ENCODE measurements at regions of chr6 and their contacts with region 1.

Region 1: GRCh38 chr6:25359191-25359861 is 80.2 kb downstream of the CARMIL1 start:
- DNase-seq: no peak
- ATAC-seq: no peak
- H3K4me3 ChIP-seq: no peak overlapping the region
- H3K4me3 Mint-ChIP-seq: no peak overlapping the region
- H3K27ac ChIP-seq: no peak overlapping the region
- H3K27ac Mint-ChIP-seq: no peak overlapping the region
- H3K4me1 ChIP-seq: no peaks in the 10 kb centered on the region
- H3K4me1 Mint-ChIP-seq: peaks cover 19% of the 10 kb centered on the region
- H3K27me3 ChIP-seq: no peaks in the 10 kb centered on the region
- H3K27me3 Mint-ChIP-seq: no peaks in the 10 kb centered on the region
- CTCF ChIP-seq: no peak

Region 2: DNA sequence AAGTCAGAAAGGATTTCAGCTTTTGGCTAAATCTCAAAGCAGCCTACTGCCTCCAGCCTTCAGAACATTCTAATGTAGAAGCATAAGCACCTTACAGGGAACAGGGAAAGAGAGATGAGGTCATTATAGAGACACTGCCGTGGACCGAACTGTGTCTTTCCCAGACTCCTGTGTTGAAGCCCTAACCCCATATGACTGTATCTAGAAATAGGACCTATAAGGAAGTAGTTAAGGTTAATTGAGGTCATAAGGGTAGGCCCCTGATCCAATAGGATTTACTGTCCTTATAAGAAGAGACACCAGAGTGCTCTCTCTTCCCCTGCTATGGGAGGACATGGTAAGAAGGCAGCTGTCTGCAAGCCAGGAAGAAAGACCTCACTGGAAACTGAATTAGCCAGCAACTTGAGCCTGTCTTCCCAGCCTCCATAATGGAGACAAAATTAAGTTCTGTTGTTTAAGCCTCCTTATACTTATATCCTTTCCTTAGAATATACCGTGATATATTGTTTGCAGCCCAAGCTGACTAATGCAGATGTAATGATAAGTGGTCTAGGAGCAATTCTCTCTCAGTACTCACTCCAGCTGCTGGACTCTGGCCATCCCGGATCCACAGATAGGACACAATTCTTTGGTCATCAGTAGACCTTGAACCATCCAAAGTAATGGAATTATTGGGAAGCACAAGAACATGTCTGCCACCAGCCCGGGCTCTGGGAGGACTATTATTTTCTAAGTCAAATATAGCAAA is 793.1 kb before region 1 on chr6:
- CTCF ChIA-PET with region 1: no interaction called
- POLR2A ChIA-PET with region 1: no interaction called
- intact Hi-C with region 1: no loop called
- DNase-seq: no peak
- ATAC-seq: no peak
- H3K4me3 ChIP-seq: no peak overlapping the region
- H3K4me3 Mint-ChIP-seq: no peak overlapping the region
- H3K27ac ChIP-seq: no peak overlapping the region
- H3K27ac Mint-ChIP-seq: no peak overlapping the region
- H3K4me1 ChIP-seq: no peaks in the 10 kb centered on the region
- H3K4me1 Mint-ChIP-seq: no peaks in the 10 kb centered on the region
- H3K27me3 ChIP-seq: no peaks in the 10 kb centered on the region
- H3K27me3 Mint-ChIP-seq: peaks cover 3% of the 10 kb centered on the region
- CTCF ChIP-seq: no peak

Region 3: GRCh38 chr6:25330796-25331685 is 28.3 kb before region 1 on chr6:
- CTCF ChIA-PET with region 1: no interaction called
- POLR2A ChIA-PET with region 1: no interaction called
- intact Hi-C with region 1: loop called in 1 of 2 experiments (anchors 1 kb)
- DNase-seq: no peak
- ATAC-seq: no peak
- H3K4me3 ChIP-seq: no peak overlapping the region
- H3K4me3 Mint-ChIP-seq: no peak overlapping the region
- H3K27ac ChIP-seq: no peak overlapping the region
- H3K27ac Mint-ChIP-seq: no peak overlapping the region
- H3K4me1 ChIP-seq: no peaks in the 10 kb centered on the region
- H3K4me1 Mint-ChIP-seq: peaks cover 42% of the 10 kb centered on the region
- H3K27me3 ChIP-seq: no peaks in the 10 kb centered on the region
- H3K27me3 Mint-ChIP-seq: no peaks in the 10 kb centered on the region
- CTCF ChIP-seq: no peak

Region 4: GRCh38 chr6:25397406-25397805 is 38.1 kb after region 1 on chr6:
- CTCF ChIA-PET with region 1: no interaction called
- POLR2A ChIA-PET with region 1: no interaction called
- intact Hi-C with region 1: loop called in 1 of 2 experiments (anchors 5 kb)
- DNase-seq: no peak
- ATAC-seq: no peak
- H3K4me3 ChIP-seq: no peak overlapping the region
- H3K4me3 Mint-ChIP-seq: no peak overlapping the region
- H3K27ac ChIP-seq: no peak overlapping the region
- H3K27ac Mint-ChIP-seq: no peak overlapping the region
- H3K4me1 ChIP-seq: no peaks in the 10 kb centered on the region
- H3K4me1 Mint-ChIP-seq: peaks cover 6% of the 10 kb centered on the region
- H3K27me3 ChIP-seq: no peaks in the 10 kb centered on the region
- H3K27me3 Mint-ChIP-seq: no peaks in the 10 kb centered on the region
- CTCF ChIP-seq: no peak

Measured in CD8-positive, alpha-beta T cell (primary cell).